ENCODE measurements at regions of chr10 and their contacts with region 1.

Region 1: GRCh38 chr10:90418869-90419652 is 438.8 kb downstream of the HTR7 start:
- DNase-seq: peak; percentile 87
- H3K4me3 ChIP-seq: no peak overlapping the region
- H3K27ac ChIP-seq: peak overlapping the region; percentile 63
- H3K4me1 ChIP-seq: peaks cover 20% of the 10 kb centered on the region
- H3K27me3 ChIP-seq: no peaks in the 10 kb centered on the region
- CTCF ChIP-seq: no peak
- POLR2A ChIP-seq: no peak

Region 2: GRCh38 chr10:90197766-90198165 is 221.3 kb before region 1 on chr10:
- CTCF ChIA-PET with region 1: no interaction called
- POLR2A ChIA-PET with region 1: no interaction called
- dilution Hi-C with region 1: no loop called
- intact Hi-C with region 1: loop called (anchors 2 kb)
- DNase-seq: peak; percentile 28
- H3K4me3 ChIP-seq: no peak overlapping the region
- H3K27ac ChIP-seq: no peak overlapping the region
- H3K4me1 ChIP-seq: peaks cover 13% of the 10 kb centered on the region
- H3K27me3 ChIP-seq: no peaks in the 10 kb centered on the region
- CTCF ChIP-seq: no peak
- POLR2A ChIP-seq: no peak

Region 3: DNA sequence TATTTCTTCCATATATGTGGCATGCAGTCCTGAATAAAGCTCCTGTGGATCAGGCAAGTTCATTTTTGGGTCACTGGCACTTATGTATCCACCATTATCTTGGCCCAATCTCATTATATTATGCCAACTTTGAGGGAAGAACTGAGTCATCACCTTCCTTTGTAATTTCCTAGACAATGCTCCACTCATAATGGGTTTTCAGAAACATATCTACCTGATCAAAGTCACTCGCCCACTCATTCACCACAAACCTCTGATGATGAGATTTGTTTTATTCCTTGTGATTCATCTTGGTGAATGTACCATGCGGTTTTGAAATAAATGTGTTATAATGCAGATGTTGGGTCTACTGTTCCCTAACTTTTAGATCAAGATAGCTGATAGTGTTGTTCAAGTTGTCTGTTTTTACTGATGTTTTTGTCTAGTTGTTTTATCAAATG is 191.8 kb before region 1 on chr10:
- CTCF ChIA-PET with region 1: no interaction called
- POLR2A ChIA-PET with region 1: no interaction called
- dilution Hi-C with region 1: no loop called
- intact Hi-C with region 1: loop called (anchors 1 kb)
- DNase-seq: peak; percentile 88
- H3K4me3 ChIP-seq: no peak overlapping the region
- H3K27ac ChIP-seq: peak overlapping the region; percentile 66
- H3K4me1 ChIP-seq: peaks cover 26% of the 10 kb centered on the region
- H3K27me3 ChIP-seq: no peaks in the 10 kb centered on the region
- CTCF ChIP-seq: no peak
- POLR2A ChIP-seq: no peak

Region 4: DNA sequence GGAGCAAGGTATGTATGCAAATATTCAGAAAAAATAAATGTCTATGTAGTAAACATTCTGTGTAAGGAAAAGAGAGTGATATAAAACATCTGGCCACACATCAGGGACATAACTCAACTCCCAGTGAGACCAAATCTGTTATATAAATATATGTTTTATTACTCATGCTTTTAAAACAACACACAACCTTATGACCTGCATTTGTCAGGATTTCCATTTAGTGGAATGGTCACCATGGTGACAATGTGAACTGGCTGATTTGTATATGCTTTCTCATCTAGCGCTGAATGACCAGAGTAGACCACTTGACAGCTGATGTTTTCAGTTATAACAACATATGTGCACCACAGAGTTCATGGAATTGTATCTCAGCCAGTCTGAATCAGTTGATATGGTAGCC is 112.9 kb before region 1 on chr10:
- CTCF ChIA-PET with region 1: no interaction called
- POLR2A ChIA-PET with region 1: no interaction called
- dilution Hi-C with region 1: no loop called
- intact Hi-C with region 1: loop called (anchors 5 kb)
- DNase-seq: peak; percentile 98
- H3K4me3 ChIP-seq: no peak overlapping the region
- H3K27ac ChIP-seq: peak overlapping the region; percentile 58
- H3K4me1 ChIP-seq: peaks cover 10% of the 10 kb centered on the region
- H3K27me3 ChIP-seq: no peaks in the 10 kb centered on the region
- CTCF ChIP-seq: no peak
- POLR2A ChIP-seq: no peak

Region 5: GRCh38 chr10:90462749-90463470 is 43.8 kb after region 1 on chr10:
- CTCF ChIA-PET with region 1: no interaction called
- POLR2A ChIA-PET with region 1: no interaction called
- dilution Hi-C with region 1: no loop called
- intact Hi-C with region 1: loop called (anchors 5 kb)
- DNase-seq: no peak
- H3K4me3 ChIP-seq: no peak overlapping the region
- H3K27ac ChIP-seq: no peak overlapping the region
- H3K4me1 ChIP-seq: peaks cover 3% of the 10 kb centered on the region
- H3K27me3 ChIP-seq: peaks cover 2 to 8% of the 10 kb centered on the region in 2 experiments
- CTCF ChIP-seq: no peak
- POLR2A ChIP-seq: no peak

Measured in endothelial cell of umbilical vein (primary cell).